ENCODE measurements at regions of chrX and their contacts with region 1.

Region 1: DNA sequence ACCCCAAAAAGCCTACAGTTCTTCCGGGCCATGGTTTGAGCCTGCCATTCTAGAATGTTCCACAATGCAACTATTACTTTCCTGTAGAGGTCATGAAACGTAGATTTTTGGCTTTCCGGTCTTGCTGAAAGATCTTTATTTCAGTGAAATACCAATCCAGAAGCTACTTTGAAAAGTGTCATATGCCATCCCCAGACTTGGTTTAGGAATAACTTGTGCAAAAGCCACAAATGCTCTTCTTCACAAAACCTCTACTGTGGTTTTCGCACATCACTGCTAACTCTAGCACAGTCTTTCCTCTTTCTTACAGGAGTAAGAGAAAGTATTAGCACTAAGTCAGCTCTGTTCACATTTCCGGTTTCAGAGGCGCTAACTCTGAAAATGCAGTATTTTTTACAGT is 12.7 kb upstream of the CD40LG start:
- DNase-seq: peak in 5 of 9 donors; percentile 49 to 68 (median 60)
- ATAC-seq: peak; percentile 80
- H3K4me3 ChIP-seq: peak overlapping the region; percentile 36
- H3K4me3 Mint-ChIP-seq: peak overlapping the region; percentile 68 to 84 (median 78)
- H3K27ac ChIP-seq: peak overlapping the region; percentile 53
- H3K27ac Mint-ChIP-seq: peak overlapping the region; percentile 80 to 94 (median 89)
- H3K4me1 ChIP-seq: peaks cover 62 to 88% of the 10 kb centered on the region in 2 donors
- H3K4me1 Mint-ChIP-seq: peaks cover 30 to 96% (median 83%) of the 10 kb centered on the region in 7 donors
- H3K27me3 ChIP-seq: no peaks in the 10 kb centered on the region
- H3K27me3 Mint-ChIP-seq: no peaks in the 10 kb centered on the region

Region 2: DNA sequence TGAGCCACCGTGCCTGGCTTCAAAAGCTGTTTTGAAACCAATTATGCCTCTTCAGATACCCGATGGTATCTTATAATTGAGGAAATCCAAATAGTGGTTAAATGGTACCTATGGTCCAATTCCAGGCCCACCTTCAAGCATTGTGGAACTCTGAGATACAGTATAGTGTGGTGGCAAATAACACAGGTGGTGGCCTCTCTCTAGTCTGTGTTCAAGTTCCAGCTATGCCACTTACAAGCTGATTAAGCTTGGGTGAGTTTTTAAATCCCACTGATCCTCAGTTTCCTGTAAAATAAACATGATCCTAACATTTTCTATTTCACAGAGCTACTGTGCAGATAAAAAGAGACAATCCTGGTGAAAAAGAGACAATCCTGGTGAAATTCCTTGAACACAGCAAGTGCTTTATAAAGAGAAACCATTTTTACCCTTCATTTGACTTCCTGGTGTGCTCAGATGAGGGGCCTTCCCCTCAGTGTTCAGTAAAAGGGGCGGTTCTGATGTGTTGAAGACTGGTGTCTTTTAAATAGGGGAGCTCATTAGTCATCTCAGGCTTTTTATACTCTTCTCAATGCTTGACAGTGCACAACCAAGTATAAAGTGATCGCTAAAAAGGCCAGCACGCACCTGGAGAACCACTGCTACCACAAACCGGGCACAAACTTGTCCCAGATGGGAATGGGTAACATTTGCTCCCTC is 18.1 kb before region 1 on chrX:
- CTCF ChIA-PET with region 1: interaction called, 3 read pairs
- POLR2A ChIA-PET with region 1: interaction called, 67 read pairs
- intact Hi-C with region 1: loop called (anchors 1 to 2 kb)
- DNase-seq: peak in 6 of 9 donors; percentile 22 to 60 (median 34)
- ATAC-seq: peak; percentile 85
- H3K4me3 ChIP-seq: peak overlapping the region; percentile 45
- H3K4me3 Mint-ChIP-seq: peak overlapping the region; percentile 30 to 73 (median 64)
- H3K27ac ChIP-seq: peak overlapping the region; percentile 60
- H3K27ac Mint-ChIP-seq: peak overlapping the region; percentile 63 to 93 (median 87)
- H3K4me1 ChIP-seq: peaks cover 18 to 50% of the 10 kb centered on the region in 2 donors
- H3K4me1 Mint-ChIP-seq: peaks cover 5 to 75% (median 64%) of the 10 kb centered on the region in 7 donors
- H3K27me3 ChIP-seq: no peaks in the 10 kb centered on the region
- H3K27me3 Mint-ChIP-seq: no peaks in the 10 kb centered on the region

Region 3: DNA sequence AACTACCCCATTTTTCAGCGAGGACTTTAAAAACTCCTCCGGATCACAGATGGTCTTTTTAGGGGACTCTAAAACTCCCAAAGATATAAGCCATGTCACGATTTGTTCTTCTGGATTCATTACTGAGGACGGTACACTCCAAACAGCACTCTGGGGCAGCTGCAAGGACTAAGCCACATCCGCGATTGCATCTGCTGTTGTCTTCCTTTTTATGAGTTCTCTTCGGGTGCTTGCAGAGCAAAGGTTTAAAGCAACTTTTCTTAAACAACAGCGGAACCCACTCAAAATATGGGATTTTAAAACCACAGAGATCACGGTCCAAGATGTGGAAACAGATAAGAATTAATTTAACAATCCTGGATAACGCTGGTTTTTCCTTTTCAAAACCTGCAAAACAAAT is 145.5 kb after region 1 on chrX and contains the start of gene ARHGEF6:
- CTCF ChIA-PET with region 1: no interaction called
- POLR2A ChIA-PET with region 1: no interaction called
- intact Hi-C with region 1: no loop called
- DNase-seq: peak in 6 of 9 donors; percentile 28 to 52 (median 46)
- ATAC-seq: peak; percentile 72
- H3K4me3 ChIP-seq: peak within 1 kb of the TSS; percentile 77
- H3K4me3 Mint-ChIP-seq: peak within 1 kb of the TSS; percentile 85 to 96 (median 93)
- H3K27ac ChIP-seq: peak within 1 kb of the TSS; percentile 80
- H3K27ac Mint-ChIP-seq: peak within 1 kb of the TSS; percentile 84 to 97 (median 96)
- H3K4me1 ChIP-seq: peaks cover 7 to 29% of the 10 kb centered on the region in 2 donors
- H3K4me1 Mint-ChIP-seq: peaks cover 32 to 73% (median 64%) of the 10 kb centered on the region in 7 donors
- H3K27me3 ChIP-seq: no peaks in the 10 kb centered on the region
- H3K27me3 Mint-ChIP-seq: no peaks in the 10 kb centered on the region
- total RNA-seq, gene ARHGEF6: 66.1 to 102 (median 81.5) TPM

Measured in naive thymus-derived CD4-positive, alpha-beta T cell (primary cell).